ENCODE measurements at regions of chr7 and their contacts with region 1.

Region 1: DNA sequence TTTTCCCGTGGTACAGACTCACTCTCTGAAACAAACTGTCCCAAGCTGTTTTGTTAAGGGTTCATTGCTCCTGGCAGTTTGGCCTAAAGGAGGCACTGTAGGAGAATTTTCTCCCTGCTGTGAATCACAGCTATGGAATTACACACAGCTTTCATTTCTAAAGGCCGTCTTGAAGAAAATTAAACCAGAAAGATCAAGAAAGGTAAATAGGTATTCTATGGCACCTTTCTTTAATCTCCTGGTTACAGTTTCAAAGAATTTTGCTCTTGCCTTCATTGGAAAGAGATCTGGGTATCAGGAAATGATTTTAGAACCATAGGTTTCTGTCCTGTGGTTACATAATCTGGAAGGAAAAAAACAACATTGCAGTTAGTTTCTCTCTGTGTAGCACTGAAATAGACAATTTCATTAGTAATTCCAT is 51.2 kb downstream of the PDK4 start:
- DNase-seq: no peak

Region 2: GRCh38 chr7:95527033-95527775 is 17.9 kb before region 1 on chr7:
- intact Hi-C with region 1: loop called (anchors 1 kb)
- DNase-seq: no peak

Region 3: GRCh38 chr7:95596198-95597063 is 51.3 kb after region 1 on chr7 and contains the start of gene PDK4:
- intact Hi-C with region 1: loop called (anchors 1 kb)
- DNase-seq: peak; percentile 96
- total RNA-seq, gene PDK4: 49.0 TPM

Region 4: DNA sequence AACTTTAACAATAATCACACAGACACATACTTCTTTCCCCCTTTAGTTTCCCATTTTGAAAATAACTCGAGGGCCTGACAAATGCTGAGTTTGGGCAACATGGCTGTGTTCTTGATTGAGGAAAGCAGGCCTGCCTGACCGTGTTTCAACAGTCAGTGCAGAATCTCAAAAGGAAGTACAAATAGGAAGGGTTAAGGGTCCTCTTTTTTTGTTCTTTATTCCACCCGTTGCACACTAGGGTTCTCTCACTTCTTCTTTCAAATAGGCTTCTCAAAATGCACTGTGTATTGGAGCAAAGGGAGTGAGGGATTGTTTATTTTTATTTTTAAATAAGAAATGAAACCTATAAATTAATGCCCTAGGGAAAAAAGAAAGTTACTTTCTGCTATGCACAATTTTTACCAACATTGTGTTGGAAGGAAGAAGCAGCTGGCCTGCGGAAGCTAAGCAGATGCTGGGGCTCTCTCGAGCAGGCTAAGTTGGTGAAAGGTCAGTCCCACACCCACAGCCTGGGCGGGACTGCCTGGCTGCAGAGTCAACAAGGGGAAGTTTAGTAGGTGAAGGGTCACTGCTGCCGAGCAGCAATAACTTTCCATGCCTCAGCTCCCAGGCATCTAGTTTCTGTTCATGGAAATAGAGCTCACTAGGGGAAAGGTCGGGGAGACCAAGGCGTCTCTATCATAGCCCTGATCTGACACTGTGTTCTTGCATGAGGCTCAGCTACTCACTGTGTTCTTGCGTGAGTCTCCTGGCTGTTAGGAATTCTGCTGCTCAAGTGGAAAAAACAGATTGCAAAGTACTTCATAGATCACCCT is 63.5 kb after region 1 on chr7:
- intact Hi-C with region 1: loop called (anchors 2 kb)
- DNase-seq: peak; percentile 94

Region 5: DNA sequence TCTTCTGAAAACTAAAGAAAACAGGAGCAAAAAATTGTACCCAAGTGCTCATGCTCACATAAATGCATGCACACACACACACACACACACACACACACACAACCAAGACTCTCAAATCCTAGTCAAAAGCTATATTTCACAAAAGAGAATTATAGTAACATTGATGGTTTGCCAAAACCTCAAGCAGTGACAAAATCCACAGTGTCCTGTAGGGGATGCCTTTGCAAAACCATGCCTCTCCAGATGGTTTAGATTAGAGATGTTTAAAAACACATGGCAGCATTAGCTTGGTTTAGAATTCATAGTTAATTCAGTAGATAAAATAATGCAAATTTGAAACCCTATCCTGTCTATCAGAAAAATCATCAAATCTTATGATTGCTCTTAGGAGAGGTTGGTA is 459.5 kb after region 1 on chr7:
- intact Hi-C with region 1: no loop called
- DNase-seq: no peak